GM13977 (cell line): ENCODE measurements at regions of chr15 and their contacts with region 1.

Region 1: GRCh38 chr15:89898614-89899294 is 5.0 kb upstream of the AP3S2 start:
- DNase-seq: peak; percentile 72
- CTCF ChIP-seq: peak; percentile 67

Region 2: GRCh38 chr15:90071208-90071807 is 172.6 kb after region 1 on chr15:
- in situ Hi-C with region 1: loop called (anchors 5 kb)
- DNase-seq: peak; percentile 81
- CTCF ChIP-seq: peak; percentile 77